ENCODE measurements at regions of chr3 and their contacts with region 1.

Region 1: DNA sequence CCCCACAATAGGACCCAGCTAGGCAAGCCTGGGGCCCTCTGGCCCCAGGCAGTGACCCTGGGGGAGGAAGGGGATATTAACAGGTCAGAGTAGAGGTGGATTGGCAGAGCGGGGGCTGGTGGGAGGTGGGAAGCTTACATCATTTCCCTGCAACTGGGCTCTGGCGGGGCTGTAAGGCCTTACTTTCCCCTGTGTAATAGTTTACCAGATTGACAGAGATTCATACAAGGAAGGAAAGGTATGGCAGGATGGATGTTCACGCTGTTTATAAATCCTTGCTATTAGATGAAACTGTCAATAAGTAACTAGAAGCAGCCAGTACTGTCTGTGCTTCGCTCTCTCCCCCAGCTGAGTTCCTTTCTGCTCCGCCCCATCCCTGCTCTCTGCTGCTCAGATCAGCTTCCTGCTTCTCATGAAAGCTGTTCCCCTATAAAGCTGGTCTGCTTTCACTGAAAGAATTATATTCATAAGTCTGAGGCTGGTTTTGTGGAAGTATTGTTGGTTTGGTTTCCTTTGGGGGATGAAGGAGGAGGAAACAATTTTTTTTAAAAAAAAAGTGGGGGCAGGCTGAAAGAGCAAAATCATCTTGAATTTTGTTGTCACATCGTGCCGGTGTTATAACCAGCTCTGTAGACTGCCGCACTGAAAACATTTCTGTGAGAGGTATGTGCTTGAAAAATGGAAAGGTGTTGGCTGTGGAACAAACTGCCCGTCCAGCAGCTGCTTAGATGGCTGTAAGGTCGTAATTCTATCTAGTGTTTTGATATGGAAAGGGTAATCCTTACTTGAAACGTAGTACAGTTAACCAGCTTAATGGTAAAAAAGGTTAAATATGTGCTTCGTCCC is 76.4 kb downstream of the BBX start:
- DNase-seq: no peak

Region 2: GRCh38 chr3:106908181-106909051 is 690.7 kb before region 1 on chr3:
- intact Hi-C with region 1: loop called in 1 of 2 experiments (anchors 5 kb)
- DNase-seq: no peak